Sigmoid colon (tissue), 7 donors: ENCODE measurements at regions of chr9 and their contacts with region 1.

Region 1: DNA sequence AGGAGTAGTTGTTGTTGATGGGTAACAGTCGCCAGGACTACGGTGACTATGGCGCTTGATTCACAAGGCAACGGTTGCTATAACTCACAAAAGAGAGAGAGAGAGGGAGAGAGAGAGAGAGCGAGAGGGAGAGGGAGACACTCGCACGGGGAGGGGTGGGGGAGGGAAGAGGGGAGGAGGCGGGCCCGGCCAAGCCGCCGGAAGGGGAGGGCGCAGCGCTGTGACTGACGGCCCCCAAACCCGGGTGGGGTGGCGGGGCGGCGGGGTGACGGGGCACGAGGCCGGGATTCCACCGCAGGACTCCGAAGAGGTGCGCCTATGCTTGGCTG is at the start of gene RFX3:
- DNase-seq: peak; percentile 95
- H3K4me3 ChIP-seq: peak within 1 kb of the TSS; percentile 84 to 97 (median 94)
- H3K27ac ChIP-seq: peak within 1 kb of the TSS; percentile 98 to 100 (median 100)
- H3K4me1 ChIP-seq: peaks cover 5 to 43% (median 19%) of the 10 kb centered on the region in 4 donors
- H3K27me3 ChIP-seq: no peaks in the 10 kb centered on the region
- CTCF ChIP-seq: no peak
- EP300 ChIP-seq: peak in 1 of 4 donors; percentile 57
- POLR2A ChIP-seq: no peak
- total RNA-seq, gene RFX3: 6.4 to 15.0 (median 9.6) TPM

Region 2: GRCh38 chr9:2014696-2015580 is 1510.9 kb before region 1 on chr9 and contains the start of gene SMARCA2:
- intact Hi-C with region 1: loop called (anchors 10 kb)
- DNase-seq: peak; percentile 99
- H3K4me3 ChIP-seq: peak within 1 kb of the TSS; percentile 81 to 89 (median 88)
- H3K27ac ChIP-seq: peak within 1 kb of the TSS; percentile 96 to 98 (median 96)
- H3K4me1 ChIP-seq: peaks cover 0 to 33% (median 27%) of the 10 kb centered on the region in 4 donors
- H3K27me3 ChIP-seq: no peaks in the 10 kb centered on the region
- CTCF ChIP-seq: no peak
- EP300 ChIP-seq: peak in 1 of 4 donors; percentile 16
- POLR2A ChIP-seq: peak; percentile 71 to 82
- total RNA-seq, gene SMARCA2: 75.0 to 209 (median 88.9) TPM

Region 3: GRCh38 chr9:2849941-2850340 is 675.9 kb before region 1 on chr9:
- intact Hi-C with region 1: loop called (anchors 10 kb)
- DNase-seq: no peak
- H3K4me3 ChIP-seq: no peak overlapping the region
- H3K27ac ChIP-seq: no peak overlapping the region
- H3K4me1 ChIP-seq: peaks cover 0 to 11% (median 8%) of the 10 kb centered on the region in 4 donors
- H3K27me3 ChIP-seq: no peaks in the 10 kb centered on the region
- CTCF ChIP-seq: no peak
- EP300 ChIP-seq: no peak
- POLR2A ChIP-seq: no peak

Region 4: DNA sequence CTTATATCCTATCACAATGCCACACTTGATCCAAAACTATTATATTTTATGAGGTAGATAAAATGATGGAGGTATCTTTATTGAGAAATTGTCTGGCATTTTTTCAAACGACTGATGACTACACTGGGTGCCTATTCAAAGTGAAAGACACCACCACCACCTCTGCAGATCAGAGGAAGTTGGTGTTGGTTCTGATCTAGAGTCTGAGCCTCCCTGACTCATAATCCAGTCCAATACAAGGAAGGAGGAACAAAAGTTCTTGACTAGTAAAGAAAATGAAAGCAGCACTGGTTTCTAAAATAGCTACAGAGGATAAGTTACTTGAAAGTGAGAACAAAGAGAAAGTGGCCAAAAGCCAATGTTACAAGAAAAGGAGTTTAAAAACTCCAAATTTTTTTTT is 139.9 kb before region 1 on chr9:
- intact Hi-C with region 1: no loop called
- DNase-seq: no peak
- H3K4me3 ChIP-seq: no peak overlapping the region
- H3K27ac ChIP-seq: no peak overlapping the region
- H3K4me1 ChIP-seq: no peaks in the 10 kb centered on the region
- H3K27me3 ChIP-seq: no peaks in the 10 kb centered on the region
- CTCF ChIP-seq: no peak
- EP300 ChIP-seq: no peak
- POLR2A ChIP-seq: no peak

Region 5: GRCh38 chr9:3732077-3733038 is 206.6 kb after region 1 on chr9:
- intact Hi-C with region 1: no loop called
- DNase-seq: no peak
- H3K4me3 ChIP-seq: peak overlapping the region in 2 of 4 donors; percentile 13 to 19
- H3K27ac ChIP-seq: peak overlapping the region in 3 of 4 donors; percentile 28 to 44 (median 40)
- H3K4me1 ChIP-seq: peaks cover 0 to 15% (median 0%) of the 10 kb centered on the region in 4 donors
- H3K27me3 ChIP-seq: no peaks in the 10 kb centered on the region
- CTCF ChIP-seq: peak; percentile 19 to 65 (median 57)
- EP300 ChIP-seq: no peak
- POLR2A ChIP-seq: no peak

Region 6: GRCh38 chr9:3784641-3785040 is 258.8 kb after region 1 on chr9:
- intact Hi-C with region 1: no loop called
- DNase-seq: no peak
- H3K4me3 ChIP-seq: no peak overlapping the region
- H3K27ac ChIP-seq: no peak overlapping the region
- H3K4me1 ChIP-seq: no peaks in the 10 kb centered on the region
- H3K27me3 ChIP-seq: no peaks in the 10 kb centered on the region
- CTCF ChIP-seq: no peak
- EP300 ChIP-seq: no peak
- POLR2A ChIP-seq: no peak

Region 7: DNA sequence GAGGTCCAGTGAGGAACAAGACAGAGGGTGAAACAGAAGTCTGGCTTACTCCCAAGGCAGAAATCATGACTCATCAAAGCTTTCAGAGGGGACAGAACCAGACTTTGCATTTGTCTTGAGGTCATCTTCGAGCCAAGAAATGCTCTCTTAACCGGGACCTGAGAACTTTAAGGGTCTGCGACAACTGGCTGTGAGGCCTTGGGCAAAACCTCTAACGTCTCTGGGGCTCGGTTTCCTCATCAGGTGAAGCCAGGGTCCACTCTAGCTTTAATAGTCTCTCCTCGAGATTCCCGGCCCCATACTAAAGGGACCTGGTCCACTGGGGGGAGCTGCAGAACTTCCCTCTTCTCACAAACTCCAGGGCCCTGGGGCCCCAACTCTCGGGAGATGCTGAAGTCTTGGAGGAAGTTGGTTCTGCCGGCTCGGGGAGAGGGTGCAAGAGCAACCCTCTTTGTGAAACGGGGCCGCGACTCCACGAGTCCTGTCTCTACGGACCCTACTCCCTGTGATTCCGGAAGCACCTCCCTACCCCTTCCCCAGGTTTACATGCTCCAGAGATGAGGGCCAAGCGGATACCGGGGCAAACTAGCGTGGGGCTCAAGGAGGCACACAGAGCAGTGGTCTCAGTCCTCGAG is 771.5 kb after region 1 on chr9:
- intact Hi-C with region 1: loop called (anchors 5 kb)
- DNase-seq: peak; percentile 91
- H3K4me3 ChIP-seq: peak overlapping the region; percentile 61 to 86 (median 66)
- H3K27ac ChIP-seq: peak overlapping the region; percentile 78 to 93 (median 92)
- H3K4me1 ChIP-seq: peaks cover 0 to 27% (median 9%) of the 10 kb centered on the region in 4 donors
- H3K27me3 ChIP-seq: no peaks in the 10 kb centered on the region
- CTCF ChIP-seq: peak in 2 of 4 experiments; percentile 22 to 33
- EP300 ChIP-seq: no peak
- POLR2A ChIP-seq: no peak

Region 8: DNA sequence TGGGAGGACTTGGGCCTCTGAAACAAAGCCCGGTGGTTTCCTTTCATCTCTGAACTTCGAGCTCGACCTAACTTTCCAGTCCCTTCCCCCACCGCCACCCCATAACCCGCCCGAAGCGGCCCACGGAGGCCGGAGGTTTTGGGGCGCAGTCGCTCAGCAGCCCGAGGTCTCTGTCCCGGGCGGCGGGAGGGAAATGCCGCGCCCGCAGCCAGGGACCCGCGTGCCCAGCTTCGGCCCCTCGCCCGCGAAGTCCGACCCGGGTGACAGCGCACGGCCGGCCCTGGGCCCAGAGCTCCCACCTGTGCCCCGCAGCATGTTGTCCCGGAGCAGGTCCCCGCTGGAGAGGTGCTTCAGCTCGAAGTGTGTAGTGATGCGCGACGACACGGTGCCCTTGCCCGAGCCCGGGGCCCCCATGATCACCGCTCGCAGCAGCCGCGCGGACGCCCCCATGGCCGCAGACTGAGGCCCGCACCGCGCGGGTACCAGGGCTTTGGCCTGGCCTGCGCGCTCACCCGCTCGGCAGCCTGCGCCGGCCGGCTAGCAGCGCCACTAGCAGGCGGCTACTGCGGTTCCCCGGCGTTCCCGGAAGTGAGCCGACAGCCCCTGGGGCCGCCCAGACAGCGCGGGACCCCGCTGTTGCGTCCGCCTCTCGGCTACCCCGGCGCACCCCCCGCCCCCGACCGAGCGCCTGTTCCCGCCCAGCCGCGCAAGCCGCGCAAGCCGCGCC is 1215.0 kb after region 1 on chr9 and contains the start of gene AK3:
- intact Hi-C with region 1: loop called (anchors 10 kb)
- DNase-seq: peak; percentile 95
- H3K4me3 ChIP-seq: peak within 1 kb of the TSS; percentile 61 to 98 (median 79)
- H3K27ac ChIP-seq: peak within 1 kb of the TSS; percentile 88 to 97 (median 95)
- H3K4me1 ChIP-seq: peaks cover 0 to 37% (median 28%) of the 10 kb centered on the region in 4 donors
- H3K27me3 ChIP-seq: no peaks in the 10 kb centered on the region
- CTCF ChIP-seq: peak in 1 of 4 experiments; percentile 13
- EP300 ChIP-seq: no peak
- POLR2A ChIP-seq: peak in 1 of 2 donors; percentile 71
- total RNA-seq, gene AK3: 94.1 to 122 (median 105) TPM

Region 9: DNA sequence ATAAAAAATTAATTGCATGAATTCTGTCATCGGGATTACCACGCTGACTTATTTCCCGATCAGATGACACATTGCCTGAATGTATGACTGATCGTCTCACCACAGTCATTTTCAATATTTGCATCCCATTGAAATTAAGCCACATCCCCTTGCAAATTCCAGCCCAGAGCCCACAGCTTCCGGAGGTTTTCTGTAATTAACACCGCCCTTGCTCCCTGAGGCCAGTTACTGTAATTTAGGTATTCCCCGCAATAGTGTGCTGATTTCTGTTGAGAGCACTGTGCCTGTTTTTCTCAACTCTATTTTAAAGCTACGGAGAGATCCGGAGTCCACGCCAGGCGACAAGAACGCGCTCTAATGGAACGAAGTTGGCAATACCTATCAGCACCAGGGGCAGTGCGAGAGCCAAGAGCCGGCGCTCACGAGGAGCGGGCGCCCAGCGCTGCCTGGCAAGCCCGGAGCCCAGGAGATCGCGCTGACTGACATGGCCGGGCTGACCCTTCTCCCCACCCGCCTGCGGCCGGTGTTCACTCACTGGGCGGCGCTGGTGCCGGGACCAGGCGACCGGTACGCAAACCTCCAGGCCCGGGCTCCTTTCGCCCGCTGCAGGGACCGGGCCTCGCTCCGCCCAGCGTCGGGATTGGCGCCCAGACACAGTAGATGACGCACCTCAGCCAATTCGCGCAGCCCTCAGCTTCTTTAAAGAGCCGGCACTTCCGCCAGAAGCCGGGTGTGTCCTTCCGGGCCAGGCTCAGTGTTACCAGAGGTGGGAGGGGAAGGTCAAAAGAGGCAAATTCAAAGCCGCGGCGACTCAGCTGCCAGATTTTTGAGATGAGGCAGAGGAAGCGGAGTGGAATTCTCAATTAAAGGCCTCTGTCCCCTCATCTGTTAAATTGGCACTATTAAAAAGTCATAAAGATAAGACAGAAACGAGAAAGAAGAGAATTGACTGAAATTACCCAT is 1911.7 kb after region 1 on chr9 and contains the start of gene PLGRKT:
- intact Hi-C with region 1: loop called (anchors 10 kb)
- DNase-seq: peak; percentile 98
- H3K4me3 ChIP-seq: peak within 1 kb of the TSS; percentile 49 to 71 (median 70)
- H3K27ac ChIP-seq: peak within 1 kb of the TSS; percentile 84 to 94 (median 92)
- H3K4me1 ChIP-seq: peaks cover 0 to 16% (median 15%) of the 10 kb centered on the region in 4 donors
- H3K27me3 ChIP-seq: no peaks in the 10 kb centered on the region
- CTCF ChIP-seq: peak in 1 of 4 experiments; percentile 10
- EP300 ChIP-seq: no peak
- POLR2A ChIP-seq: peak; percentile 80 to 89
- total RNA-seq, gene PLGRKT: 14.1 to 25.0 (median 19.7) TPM